Activated B cell treated with CpG ODN at 0.5 μM for 24 hours (primary cell): ENCODE measurements at regions of chr19 and their contacts with region 1.

Region 1: DNA sequence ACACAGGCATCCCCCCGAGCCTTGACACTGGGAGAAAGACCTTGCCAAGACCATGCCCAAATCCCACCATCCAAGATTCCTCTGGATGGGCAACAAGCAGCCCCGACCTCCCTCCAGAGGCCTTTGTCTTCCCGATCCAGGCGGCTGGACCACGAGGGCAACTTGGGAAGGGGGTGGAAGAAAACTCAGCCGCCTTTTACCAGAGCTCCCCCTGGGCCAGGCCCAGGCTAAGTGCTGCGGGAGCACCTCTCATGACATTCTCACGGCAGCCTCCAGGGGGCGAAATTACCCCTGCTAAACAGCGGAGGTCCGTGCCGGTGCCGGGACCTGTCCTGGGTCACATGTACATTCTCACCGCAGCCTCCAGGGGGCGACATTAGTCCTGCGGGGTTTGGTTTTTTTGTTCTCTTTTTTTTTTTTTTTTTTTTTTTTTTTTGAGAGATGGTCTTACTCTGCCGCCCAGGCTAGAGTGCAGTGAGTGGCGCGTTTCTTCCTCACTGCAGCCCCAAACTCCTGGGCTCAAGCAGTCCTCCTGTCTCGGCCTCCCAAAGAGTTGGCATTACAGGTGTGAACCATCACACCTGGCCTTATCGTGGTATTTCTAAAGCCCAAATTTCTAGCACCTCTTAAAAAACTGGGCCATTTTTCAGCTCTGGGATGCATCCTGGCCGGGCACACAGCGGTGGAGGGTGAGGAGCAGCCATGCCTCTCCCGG is 2.1 kb upstream of the RSPH6A start:
- DNase-seq: peak; percentile 94
- ATAC-seq: peak; percentile 100
- H3K4me3 Mint-ChIP-seq: no peak overlapping the region
- H3K27ac Mint-ChIP-seq: peak overlapping the region; percentile 68
- H3K4me1 Mint-ChIP-seq: peaks cover 9% of the 10 kb centered on the region
- H3K27me3 Mint-ChIP-seq: no peaks in the 10 kb centered on the region
- CTCF ChIP-seq: peak; percentile 65

Region 2: DNA sequence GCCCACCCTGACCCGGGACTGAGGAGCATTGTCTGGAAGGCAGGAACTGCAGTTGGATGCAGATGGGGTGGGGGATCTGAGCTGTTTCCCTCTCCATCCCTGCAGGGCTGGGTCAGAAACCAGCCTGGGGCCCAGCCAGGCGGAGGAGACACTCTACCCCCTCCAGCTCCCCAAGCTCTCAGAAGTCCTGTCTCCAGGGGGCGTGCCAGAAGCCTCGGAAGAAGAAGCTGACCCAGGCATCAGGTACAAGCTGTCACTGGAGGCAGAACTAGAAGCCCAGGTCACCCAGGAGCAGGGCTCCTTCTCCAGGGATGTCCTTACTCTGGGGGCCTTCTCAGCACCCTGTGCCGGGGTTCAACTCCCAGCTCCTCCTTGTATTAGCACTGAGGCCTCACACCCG is 63.6 kb before region 1 on chr19:
- CTCF ChIA-PET with region 1: no interaction called
- POLR2A ChIA-PET with region 1: no interaction called
- intact Hi-C with region 1: no loop called
- DNase-seq: no peak
- ATAC-seq: no peak
- H3K4me3 Mint-ChIP-seq: no peak overlapping the region
- H3K27ac Mint-ChIP-seq: no peak overlapping the region
- H3K4me1 Mint-ChIP-seq: no peaks in the 10 kb centered on the region
- H3K27me3 Mint-ChIP-seq: peaks cover 2% of the 10 kb centered on the region
- CTCF ChIP-seq: no peak

Region 3: GRCh38 chr19:45927565-45928261 is 110.5 kb after region 1 on chr19:
- CTCF ChIA-PET with region 1: no interaction called
- POLR2A ChIA-PET with region 1: no interaction called
- intact Hi-C with region 1: loop called (anchors 1 kb)
- DNase-seq: peak; percentile 76
- ATAC-seq: peak; percentile 100
- H3K4me3 Mint-ChIP-seq: no peak overlapping the region
- H3K27ac Mint-ChIP-seq: no peak overlapping the region
- H3K4me1 Mint-ChIP-seq: peaks cover 9% of the 10 kb centered on the region
- H3K27me3 Mint-ChIP-seq: peaks cover 14% of the 10 kb centered on the region
- CTCF ChIP-seq: no peak

Region 4: GRCh38 chr19:46016426-46017094 is 199.4 kb after region 1 on chr19:
- CTCF ChIA-PET with region 1: no interaction called
- POLR2A ChIA-PET with region 1: interaction called, 4 read pairs
- intact Hi-C with region 1: loop called (anchors 1 kb)
- DNase-seq: peak; percentile 74
- ATAC-seq: peak; percentile 82
- H3K4me3 Mint-ChIP-seq: peak overlapping the region; percentile 85
- H3K27ac Mint-ChIP-seq: peak overlapping the region; percentile 8
- H3K4me1 Mint-ChIP-seq: peaks cover 19% of the 10 kb centered on the region
- H3K27me3 Mint-ChIP-seq: peaks cover 12% of the 10 kb centered on the region
- CTCF ChIP-seq: no peak

Region 5: GRCh38 chr19:46186101-46187100 is 369.2 kb after region 1 on chr19:
- CTCF ChIA-PET with region 1: no interaction called
- POLR2A ChIA-PET with region 1: no interaction called
- intact Hi-C with region 1: loop called (anchors 5 kb)
- DNase-seq: no peak
- ATAC-seq: no peak
- H3K4me3 Mint-ChIP-seq: no peak overlapping the region
- H3K27ac Mint-ChIP-seq: no peak overlapping the region
- H3K4me1 Mint-ChIP-seq: peaks cover 20% of the 10 kb centered on the region
- H3K27me3 Mint-ChIP-seq: peaks cover 42% of the 10 kb centered on the region
- CTCF ChIP-seq: no peak